Calu3 (cell line): ENCODE measurements at regions of chr7 and their contacts with region 1.

Region 1: DNA sequence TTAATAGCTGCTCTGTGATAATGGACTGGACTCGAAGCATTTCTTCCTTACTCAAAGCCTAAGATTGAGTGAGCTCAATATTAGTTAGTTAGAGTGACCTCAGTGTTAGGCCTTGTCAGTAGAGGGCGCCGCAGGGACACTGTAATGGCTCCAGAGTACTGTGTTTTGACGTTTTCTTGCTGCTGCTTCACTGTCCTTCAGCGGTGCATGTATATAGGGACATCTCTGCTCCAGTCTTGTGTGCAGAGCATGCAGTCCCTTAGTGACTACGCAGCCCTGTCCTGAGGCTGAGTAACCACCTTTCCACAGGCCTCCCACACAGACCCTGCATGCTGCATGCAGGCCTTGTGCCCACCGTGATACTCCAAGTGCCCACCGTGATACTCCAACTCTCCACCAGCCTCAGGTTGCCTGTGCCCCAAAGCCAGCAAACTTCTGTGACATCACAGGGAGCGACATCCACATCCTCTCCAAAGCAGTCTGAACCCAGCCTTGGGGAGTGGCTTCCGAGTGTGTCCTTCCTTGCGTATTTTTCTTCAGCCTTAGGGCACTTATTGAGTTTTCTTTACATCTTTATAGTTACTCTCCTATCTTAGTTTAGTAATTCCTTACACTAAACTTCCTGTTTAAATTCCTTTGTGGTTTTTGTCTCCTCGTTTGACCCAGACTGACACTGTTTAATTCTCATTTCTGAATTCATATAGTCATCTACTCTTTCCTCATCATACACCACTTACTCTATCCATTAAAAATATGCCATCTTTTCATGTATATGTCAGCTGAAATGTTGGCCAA is 118.2 kb downstream of the JAZF1 start:
- DNase-seq: peak; percentile 91
- H3K4me3 Mint-ChIP-seq: peak overlapping the region; percentile 15
- H3K27ac Mint-ChIP-seq: peak overlapping the region; percentile 15
- H3K4me1 Mint-ChIP-seq: peaks cover 39% of the 10 kb centered on the region
- H3K27me3 Mint-ChIP-seq: no peaks in the 10 kb centered on the region
- CTCF ChIP-seq: peak; percentile 88

Region 2: GRCh38 chr7:27409776-27410175 is 652.6 kb before region 1 on chr7:
- CTCF ChIA-PET with region 1: no interaction called
- intact Hi-C with region 1: no loop called
- DNase-seq: no peak
- H3K4me3 Mint-ChIP-seq: no peak overlapping the region
- H3K27ac Mint-ChIP-seq: no peak overlapping the region
- H3K4me1 Mint-ChIP-seq: peaks cover 8% of the 10 kb centered on the region
- H3K27me3 Mint-ChIP-seq: no peaks in the 10 kb centered on the region
- CTCF ChIP-seq: no peak

Region 3: DNA sequence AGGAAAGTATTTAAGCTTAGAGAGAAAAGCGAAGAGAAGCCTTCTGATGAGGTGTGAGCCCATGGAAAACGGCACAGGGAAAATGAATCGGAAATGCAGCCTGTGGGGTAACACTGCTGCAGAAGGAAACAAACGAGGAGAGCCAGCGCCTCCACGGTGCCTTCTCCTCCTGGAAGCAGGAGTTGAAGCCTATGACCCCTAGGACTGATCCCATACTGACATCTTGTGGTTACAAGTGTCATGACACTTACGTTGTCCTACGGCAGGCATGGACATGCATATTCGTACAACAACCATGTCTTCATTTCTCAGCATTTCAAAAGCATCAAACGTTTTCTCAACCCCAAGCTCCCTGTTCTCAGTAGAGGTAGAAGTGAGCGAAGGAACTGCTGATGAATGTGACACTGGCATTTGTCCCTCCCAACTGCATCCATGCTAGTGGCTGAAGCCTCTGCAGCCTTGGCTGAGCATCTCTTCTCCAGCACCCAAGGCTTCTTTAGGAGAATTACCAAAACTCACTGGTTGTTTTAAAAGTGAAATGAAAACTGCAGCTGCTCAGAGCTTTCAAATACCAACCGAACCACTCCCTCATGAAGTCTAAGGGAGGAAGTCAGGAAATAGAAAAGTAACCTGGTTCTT is 42.0 kb before region 1 on chr7:
- CTCF ChIA-PET with region 1: no interaction called
- intact Hi-C with region 1: no loop called
- DNase-seq: peak; percentile 75
- H3K4me3 Mint-ChIP-seq: no peak overlapping the region
- H3K27ac Mint-ChIP-seq: no peak overlapping the region
- H3K4me1 Mint-ChIP-seq: peaks cover 9% of the 10 kb centered on the region
- H3K27me3 Mint-ChIP-seq: no peaks in the 10 kb centered on the region
- CTCF ChIP-seq: peak; percentile 84

Region 4: DNA sequence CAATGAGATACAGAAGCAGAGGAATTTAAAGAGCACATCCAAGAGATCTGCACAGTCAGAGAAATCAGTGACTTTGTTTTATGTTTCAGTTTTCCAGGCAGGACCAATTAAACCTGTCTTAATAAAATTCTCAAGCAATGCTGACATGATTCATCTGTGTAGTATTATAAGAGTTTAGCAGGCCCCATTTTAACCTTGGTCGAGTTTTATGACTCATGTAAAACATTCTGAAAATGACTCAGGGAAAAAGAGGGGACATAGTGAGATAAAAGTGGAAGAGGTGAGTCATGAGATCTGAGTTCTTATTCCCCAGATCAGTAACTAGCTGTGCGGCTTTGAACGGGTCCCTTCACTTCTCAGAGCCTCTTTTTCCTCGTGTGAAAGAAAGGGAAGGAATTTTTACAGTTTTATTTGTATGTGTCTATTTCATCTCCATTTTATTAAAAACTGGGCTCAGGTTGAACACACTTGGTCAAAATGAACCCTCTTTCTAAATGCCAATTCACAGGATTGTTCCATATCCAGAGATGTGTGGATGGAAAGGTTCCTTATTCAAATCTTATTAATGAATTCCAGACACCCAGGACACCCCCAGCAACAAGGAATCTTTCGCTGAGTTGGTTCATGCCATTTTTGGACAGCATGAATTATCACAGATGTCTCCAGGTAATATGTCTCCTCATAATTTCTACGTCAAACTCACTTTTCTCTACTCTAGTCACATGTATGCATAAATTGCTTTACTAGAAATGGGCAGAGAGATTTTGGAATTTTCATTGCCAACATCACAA is 25.0 kb before region 1 on chr7:
- CTCF ChIA-PET with region 1: interaction called, 16 read pairs
- intact Hi-C with region 1: no loop called
- DNase-seq: peak; percentile 48
- H3K4me3 Mint-ChIP-seq: peak overlapping the region; percentile 46
- H3K27ac Mint-ChIP-seq: peak overlapping the region; percentile 80
- H3K4me1 Mint-ChIP-seq: peaks cover 78% of the 10 kb centered on the region
- H3K27me3 Mint-ChIP-seq: no peaks in the 10 kb centered on the region
- CTCF ChIP-seq: no peak

Region 5: GRCh38 chr7:28078036-28078901 is 15.9 kb after region 1 on chr7:
- CTCF ChIA-PET with region 1: interaction called, 88 read pairs
- intact Hi-C with region 1: loop called (anchors 1 kb)
- DNase-seq: peak; percentile 65
- H3K4me3 Mint-ChIP-seq: no peak overlapping the region
- H3K27ac Mint-ChIP-seq: no peak overlapping the region
- H3K4me1 Mint-ChIP-seq: peaks cover 13% of the 10 kb centered on the region
- H3K27me3 Mint-ChIP-seq: no peaks in the 10 kb centered on the region
- CTCF ChIP-seq: peak; percentile 96

Region 6: GRCh38 chr7:28096713-28097112 is 34.3 kb after region 1 on chr7:
- CTCF ChIA-PET with region 1: interaction called, 47 read pairs
- intact Hi-C with region 1: loop called (anchors 1 kb)
- DNase-seq: peak; percentile 68
- H3K4me3 Mint-ChIP-seq: no peak overlapping the region
- H3K27ac Mint-ChIP-seq: no peak overlapping the region
- H3K4me1 Mint-ChIP-seq: no peaks in the 10 kb centered on the region
- H3K27me3 Mint-ChIP-seq: no peaks in the 10 kb centered on the region
- CTCF ChIP-seq: peak; percentile 87